Sigmoid colon (tissue), 7 donors: ENCODE measurements at regions of chr14 and their contacts with region 1.

Region 1: DNA sequence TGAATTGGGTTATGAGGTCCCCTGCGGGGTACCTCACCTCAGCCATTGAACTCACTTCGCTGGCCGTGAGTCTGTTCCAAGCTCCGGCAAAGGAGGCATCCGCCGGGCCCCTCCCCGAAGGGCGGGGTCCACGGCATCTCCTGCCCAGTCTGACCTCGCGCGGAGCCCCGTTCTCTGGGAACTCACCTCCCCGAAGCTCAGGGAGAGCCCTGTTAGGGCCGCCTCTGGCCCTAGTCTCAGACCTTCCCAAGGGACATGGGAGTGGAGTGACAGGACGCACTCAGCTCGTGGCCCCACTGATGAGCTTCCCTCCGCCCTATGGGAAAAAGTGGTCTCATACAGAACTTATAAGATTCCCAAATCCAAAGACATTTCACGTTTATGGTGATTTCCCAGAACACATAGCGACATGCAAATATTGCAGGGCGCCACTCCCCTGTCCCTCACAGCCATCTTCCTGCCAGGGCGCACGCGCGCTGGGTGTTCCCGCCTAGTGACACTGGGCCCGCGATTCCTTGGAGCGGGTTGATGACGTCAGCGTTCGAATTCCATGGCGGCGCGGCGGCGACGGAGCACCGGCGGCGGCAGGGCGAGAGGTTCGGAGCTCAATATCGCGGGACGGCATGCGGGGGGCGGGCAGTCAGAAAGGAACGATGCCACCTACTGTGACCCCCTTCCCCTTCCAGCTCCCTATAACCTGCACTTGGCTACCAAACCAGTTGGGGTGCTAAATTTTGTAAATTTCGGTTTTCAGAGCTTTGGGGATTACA is at the start of gene PARP2:
- DNase-seq: peak; percentile 99
- H3K4me3 ChIP-seq: peak within 1 kb of the TSS; percentile 63 to 88 (median 72)
- H3K27ac ChIP-seq: peak within 1 kb of the TSS; percentile 92 to 95 (median 94)
- H3K4me1 ChIP-seq: peaks cover 0 to 11% (median 8%) of the 10 kb centered on the region in 4 donors
- H3K27me3 ChIP-seq: no peaks in the 10 kb centered on the region
- CTCF ChIP-seq: peak in 1 of 4 experiments; percentile 4
- EP300 ChIP-seq: peak in 1 of 4 donors; percentile 64
- POLR2A ChIP-seq: peak; percentile 65 to 77
- total RNA-seq, gene PARP2: 7.4 to 14.3 (median 10.6) TPM

Region 2: GRCh38 chr14:20332788-20333493 is 10.3 kb before region 1 on chr14 and contains the start of gene CCNB1IP1:
- intact Hi-C with region 1: loop called (anchors 1 kb)
- DNase-seq: peak; percentile 86
- H3K4me3 ChIP-seq: peak within 1 kb of the TSS; percentile 56 to 59 (median 56)
- H3K27ac ChIP-seq: peak within 1 kb of the TSS; percentile 86 to 91 (median 90)
- H3K4me1 ChIP-seq: peaks cover 0 to 30% (median 15%) of the 10 kb centered on the region in 4 donors
- H3K27me3 ChIP-seq: no peaks in the 10 kb centered on the region
- CTCF ChIP-seq: no peak
- EP300 ChIP-seq: peak in 1 of 4 donors; percentile 15
- POLR2A ChIP-seq: peak; percentile 46 to 69
- total RNA-seq, gene CCNB1IP1: 43.2 to 55.8 (median 44.4) TPM

Region 3: DNA sequence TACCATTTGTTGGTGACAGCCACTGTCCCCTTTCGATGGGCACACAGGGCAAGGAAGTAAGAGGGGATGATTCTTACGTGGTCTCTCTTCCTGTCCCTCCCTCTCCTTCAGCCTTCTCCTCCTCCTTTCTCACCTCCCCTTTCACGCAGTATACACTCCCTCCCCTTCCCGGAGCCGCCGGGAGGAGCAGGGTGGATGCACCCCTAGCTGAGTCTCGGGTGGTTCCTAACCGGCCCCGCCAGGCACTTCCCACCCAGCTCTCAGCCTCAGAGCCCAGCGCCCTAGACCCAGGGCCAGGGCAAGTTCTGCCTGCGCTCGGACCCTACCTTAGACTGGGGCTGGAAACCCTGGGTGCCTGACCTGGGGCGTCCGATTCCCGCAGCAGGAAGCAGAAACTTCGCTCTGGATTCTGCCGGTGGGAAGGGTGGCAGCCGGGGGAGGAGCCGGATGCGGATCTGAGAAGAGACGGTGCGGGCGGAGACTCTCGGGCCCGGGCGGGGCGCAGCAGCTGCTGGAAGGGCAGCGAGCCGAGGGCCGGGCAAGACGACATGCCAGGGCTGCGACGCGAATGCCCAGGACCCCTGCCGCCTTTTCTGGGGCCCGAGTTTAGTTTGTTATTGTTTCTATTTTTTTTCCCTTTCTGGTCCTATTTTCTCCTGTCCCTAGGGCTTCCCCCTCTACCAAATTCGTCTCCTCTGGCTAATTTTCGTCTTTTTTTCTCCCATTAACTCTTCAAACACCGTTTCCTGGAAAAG is 69.9 kb after region 1 on chr14 and contains the start of gene TEP1:
- intact Hi-C with region 1: loop called (anchors 2 kb)
- DNase-seq: peak; percentile 95
- H3K4me3 ChIP-seq: peak within 1 kb of the TSS; percentile 64 to 87 (median 77)
- H3K27ac ChIP-seq: peak within 1 kb of the TSS; percentile 94 to 96 (median 96)
- H3K4me1 ChIP-seq: peaks cover 0 to 19% (median 13%) of the 10 kb centered on the region in 4 donors
- H3K27me3 ChIP-seq: no peaks in the 10 kb centered on the region
- CTCF ChIP-seq: no peak
- EP300 ChIP-seq: no peak
- POLR2A ChIP-seq: peak; percentile 50 to 64
- total RNA-seq, gene TEP1: 12.7 to 42.7 (median 19.6) TPM

Region 4: GRCh38 chr14:20454516-20455354 is 111.5 kb after region 1 on chr14 and contains the starts of genes APEX1 and OSGEP:
- intact Hi-C with region 1: loop called (anchors 2 kb)
- DNase-seq: peak; percentile 99
- H3K4me3 ChIP-seq: peak within 1 kb of the TSS; percentile 53 to 72 (median 66)
- H3K27ac ChIP-seq: peak within 1 kb of the TSS; percentile 90 to 93 (median 92)
- H3K4me1 ChIP-seq: peaks cover 0 to 39% (median 27%) of the 10 kb centered on the region in 4 donors
- H3K27me3 ChIP-seq: no peaks in the 10 kb centered on the region
- CTCF ChIP-seq: no peak
- EP300 ChIP-seq: peak in 1 of 4 donors; percentile 3
- POLR2A ChIP-seq: peak; percentile 81 to 82
- total RNA-seq, gene APEX1: 118 to 181 (median 146) TPM
- total RNA-seq, gene OSGEP: 34.1 to 65.6 (median 50.7) TPM